ENCODE measurements at regions of chr5 and their contacts with region 1.

Region 1: GRCh38 chr5:134738133-134738962 is at the start of gene CAMLG:
- DNase-seq: peak; percentile 92
- ATAC-seq: peak; percentile 96
- H3K4me3 ChIP-seq: peak within 1 kb of the TSS; percentile 83 to 91 (median 83)
- H3K27ac ChIP-seq: peak within 1 kb of the TSS; percentile 61
- H3K4me1 ChIP-seq: peaks cover 40% of the 10 kb centered on the region
- H3K27me3 ChIP-seq: no peaks in the 10 kb centered on the region; a peak in 1 of 5 replicates
- CTCF ChIP-seq: peak; percentile 97
- EP300 ChIP-seq: no peak
- POLR2A ChIP-seq: peak; percentile 78 to 87
- RAD21 ChIP-seq: peak; percentile 81
- total RNA-seq, gene CAMLG: 19.8 and 23.1 TPM in 2 replicates

Region 2: GRCh38 chr5:134215757-134216156 is 522.6 kb before region 1 on chr5:
- CTCF ChIA-PET with region 1: no interaction called
- POLR2A ChIA-PET with region 1: no interaction called
- in situ Hi-C with region 1: no loop called
- intact Hi-C with region 1: no loop called
- DNase-seq: no peak
- ATAC-seq: no peak
- H3K4me3 ChIP-seq: no peak overlapping the region
- H3K27ac ChIP-seq: no peak overlapping the region
- H3K4me1 ChIP-seq: peaks cover 23% of the 10 kb centered on the region
- H3K27me3 ChIP-seq: no peaks in the 10 kb centered on the region
- CTCF ChIP-seq: no peak
- EP300 ChIP-seq: no peak
- POLR2A ChIP-seq: no peak
- RAD21 ChIP-seq: no peak

Region 3: DNA sequence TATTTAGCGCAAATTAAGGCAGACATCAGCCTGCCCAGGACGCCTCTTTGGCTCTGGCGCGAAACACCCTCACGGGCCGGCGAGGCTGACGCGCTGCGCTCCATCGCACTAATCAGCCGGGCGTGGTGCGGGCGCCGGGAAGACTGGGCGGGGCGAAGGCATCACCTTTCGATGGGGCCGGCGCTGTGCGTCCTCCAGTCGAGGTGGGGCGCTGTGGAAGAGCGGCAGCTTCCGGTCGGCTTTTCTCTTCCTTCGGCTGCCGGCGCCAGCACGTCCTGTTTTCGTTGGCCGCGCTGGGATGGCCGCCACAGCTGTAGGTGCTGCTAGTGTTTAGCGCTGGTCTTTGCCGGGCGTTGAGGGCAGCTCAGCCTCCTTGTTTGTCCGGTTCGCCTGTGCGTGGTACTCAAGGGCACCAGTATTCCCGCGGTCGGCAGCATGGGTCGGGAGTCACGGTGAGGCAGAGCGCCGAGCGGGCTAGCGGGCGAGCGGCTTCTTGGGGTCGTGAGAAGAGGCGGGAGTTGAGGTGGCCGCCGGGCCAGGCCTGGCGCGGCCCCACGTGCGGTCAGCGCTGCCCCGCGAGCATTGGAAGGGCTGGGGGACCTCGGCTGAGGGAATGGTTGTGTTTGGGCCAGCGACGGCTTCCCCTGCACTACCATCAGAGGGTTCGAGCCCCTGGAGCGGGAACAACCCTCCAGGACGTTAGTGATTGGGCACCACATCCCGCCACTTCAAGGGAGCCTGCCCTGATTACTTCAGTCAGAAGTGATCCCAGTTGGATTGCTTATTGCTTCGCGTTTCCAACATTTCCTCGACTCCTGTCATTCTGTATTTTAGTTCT is 20.4 kb after region 1 on chr5 and contains the start of gene DDX46:
- CTCF ChIA-PET with region 1: interaction called, 3 read pairs
- POLR2A ChIA-PET with region 1: interaction called, 18 read pairs
- in situ Hi-C with region 1: no loop called
- intact Hi-C with region 1: loop called (anchors 1 kb)
- DNase-seq: peak; percentile 85
- ATAC-seq: peak; percentile 98
- H3K4me3 ChIP-seq: peak within 1 kb of the TSS; percentile 70 to 93 (median 76)
- H3K27ac ChIP-seq: peak within 1 kb of the TSS; percentile 76
- H3K4me1 ChIP-seq: peaks cover 30% of the 10 kb centered on the region
- H3K27me3 ChIP-seq: no peaks in the 10 kb centered on the region; a peak in 1 of 5 replicates
- CTCF ChIP-seq: peak; percentile 98
- EP300 ChIP-seq: 0 out of 4 replicates have a peak, but pooled peaks of 1 of the 2 experiments have one; percentile 7
- POLR2A ChIP-seq: peak; percentile 89 to 90
- RAD21 ChIP-seq: peak; percentile 55
- total RNA-seq, gene DDX46: 59.3 and 74.8 TPM in 2 replicates

Region 4: DNA sequence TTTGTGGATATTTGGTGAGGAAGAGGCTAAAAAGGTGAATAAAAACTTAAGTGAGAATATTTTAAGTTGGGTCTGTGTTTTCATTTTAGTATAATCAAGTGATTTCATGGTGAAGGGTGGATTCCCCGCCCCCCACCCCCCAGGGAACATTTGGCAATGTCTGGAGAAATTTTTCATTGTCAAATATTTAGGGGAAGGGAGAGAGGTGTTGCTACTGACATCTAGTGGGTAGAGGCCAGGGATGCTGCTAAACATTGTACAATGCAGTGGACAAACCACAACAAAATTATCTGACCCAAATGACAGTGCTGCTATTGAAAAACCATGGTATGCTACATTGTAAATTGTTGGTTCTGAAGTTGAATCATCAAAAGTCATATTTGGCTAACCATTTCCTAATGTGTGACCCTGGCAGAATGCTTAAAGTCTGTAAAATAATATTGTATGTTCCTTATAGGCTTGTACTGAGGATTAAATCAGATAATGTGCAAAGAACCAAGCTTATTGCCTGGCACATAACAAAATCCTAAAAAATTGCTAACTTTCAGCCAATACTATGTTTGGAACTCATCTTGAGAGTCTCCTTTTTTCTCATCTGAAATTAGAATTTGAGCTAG is 113.1 kb after region 1 on chr5:
- CTCF ChIA-PET with region 1: no interaction called
- POLR2A ChIA-PET with region 1: no interaction called
- in situ Hi-C with region 1: no loop called
- intact Hi-C with region 1: loop called (anchors 10 kb)
- DNase-seq: no peak
- ATAC-seq: peak; percentile 53; the same call in 2 of the 3 replicates
- H3K4me3 ChIP-seq: no peak overlapping the region
- H3K27ac ChIP-seq: no peak overlapping the region
- H3K4me1 ChIP-seq: peaks cover 32% of the 10 kb centered on the region
- H3K27me3 ChIP-seq: no peaks in the 10 kb centered on the region
- CTCF ChIP-seq: peak; percentile 48
- EP300 ChIP-seq: no peak
- POLR2A ChIP-seq: no peak
- RAD21 ChIP-seq: no peak

Region 5: GRCh38 chr5:134873987-134874830 is 135.9 kb after region 1 on chr5 and contains the start of gene TXNDC15:
- CTCF ChIA-PET with region 1: no interaction called
- POLR2A ChIA-PET with region 1: interaction called, 10 read pairs
- in situ Hi-C with region 1: no loop called
- intact Hi-C with region 1: no loop called
- DNase-seq: peak; percentile 66
- ATAC-seq: peak; percentile 94
- H3K4me3 ChIP-seq: peak within 1 kb of the TSS; percentile 72 to 96 (median 94)
- H3K27ac ChIP-seq: peak within 1 kb of the TSS; percentile 84
- H3K4me1 ChIP-seq: peaks cover 31% of the 10 kb centered on the region
- H3K27me3 ChIP-seq: no peaks in the 10 kb centered on the region; a peak in 1 of 5 replicates
- CTCF ChIP-seq: peak; percentile 32; the same call in 1 of the 2 replicates
- EP300 ChIP-seq: no peak
- POLR2A ChIP-seq: peak; percentile 82 to 90
- RAD21 ChIP-seq: no peak; the same call in 1 of the 2 replicates
- total RNA-seq, gene TXNDC15: 33.6 and 49.9 TPM in 2 replicates

Measured in HepG2 (cell line).